GM12878 (cell line): ENCODE measurements at regions of chr4 and their contacts with region 1.

Region 1: GRCh38 chr4:126604268-126604867 is 1028.4 kb upstream of the INTU start:
- DNase-seq: no peak
- ATAC-seq: peak; percentile 80
- H3K4me3 ChIP-seq: no peak overlapping the region
- H3K27ac ChIP-seq: no peak overlapping the region
- H3K4me1 ChIP-seq: no peaks in the 10 kb centered on the region
- H3K27me3 ChIP-seq: no peaks in the 10 kb centered on the region
- CTCF ChIP-seq: peak; percentile 50 to 56 (median 51); a peak in 5 of 6 replicates
- EP300 ChIP-seq: no peak
- POLR2A ChIP-seq: no peak
- RAD21 ChIP-seq: peak; percentile 50; the same call in 1 of the 2 replicates

Region 2: GRCh38 chr4:126354784-126355183 is 249.6 kb before region 1 on chr4:
- CTCF ChIA-PET with region 1: no interaction called
- POLR2A ChIA-PET with region 1: no interaction called
- RAD21 ChIA-PET with region 1: no interaction called
- SMC1A ChIA-PET with region 1: no interaction called
- in situ Hi-C with region 1: no loop called
- intact Hi-C with region 1: no loop called
- DNase-seq: no peak
- ATAC-seq: no peak
- H3K4me3 ChIP-seq: no peak overlapping the region
- H3K27ac ChIP-seq: no peak overlapping the region
- H3K4me1 ChIP-seq: no peaks in the 10 kb centered on the region
- H3K27me3 ChIP-seq: no peaks in the 10 kb centered on the region
- CTCF ChIP-seq: no peak
- EP300 ChIP-seq: no peak
- POLR2A ChIP-seq: no peak
- RAD21 ChIP-seq: no peak

Region 3: DNA sequence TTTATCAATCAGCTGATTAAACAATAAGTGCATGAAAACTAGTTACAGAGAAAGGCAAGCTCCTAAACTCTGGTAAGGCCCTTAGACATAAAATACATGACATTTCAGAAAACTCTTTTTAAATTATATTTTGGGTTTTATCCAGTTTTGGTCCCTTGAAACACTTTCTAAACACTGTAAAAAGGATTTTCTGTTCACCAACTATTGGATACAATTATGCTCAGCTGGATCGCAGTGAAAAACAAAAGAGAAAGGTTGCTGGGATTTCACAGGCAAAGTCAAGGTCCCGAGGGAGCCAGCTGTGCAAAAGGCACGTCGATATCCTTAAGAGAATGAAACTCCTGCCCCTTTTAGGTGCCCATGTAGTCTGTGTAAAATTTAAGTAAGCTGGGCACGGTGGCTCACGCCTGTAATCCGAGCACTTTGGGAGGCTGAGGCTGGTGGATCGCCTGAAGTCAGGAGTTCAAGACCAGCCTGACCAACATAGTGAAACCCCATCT is 10.0 kb after region 1 on chr4:
- CTCF ChIA-PET with region 1: interaction called, 10 read pairs
- POLR2A ChIA-PET with region 1: no interaction called
- RAD21 ChIA-PET with region 1: no interaction called
- SMC1A ChIA-PET with region 1: no interaction called
- in situ Hi-C with region 1: no loop called
- intact Hi-C with region 1: no loop called
- DNase-seq: no peak
- ATAC-seq: no peak
- H3K4me3 ChIP-seq: no peak overlapping the region
- H3K27ac ChIP-seq: no peak overlapping the region
- H3K4me1 ChIP-seq: no peaks in the 10 kb centered on the region
- H3K27me3 ChIP-seq: no peaks in the 10 kb centered on the region
- CTCF ChIP-seq: no peak
- EP300 ChIP-seq: no peak
- POLR2A ChIP-seq: no peak
- RAD21 ChIP-seq: no peak